Calu3 (cell line): ENCODE measurements at regions of chr17 and their contacts with region 1.

Region 1: GRCh38 chr17:78497115-78497540 is 80.1 kb downstream of the DNAH17 start:
- DNase-seq: peak; percentile 84
- H3K4me3 Mint-ChIP-seq: no peak overlapping the region
- H3K27ac Mint-ChIP-seq: no peak overlapping the region
- H3K4me1 Mint-ChIP-seq: no peaks in the 10 kb centered on the region
- H3K27me3 Mint-ChIP-seq: peaks cover 49% of the 10 kb centered on the region
- CTCF ChIP-seq: peak; percentile 79

Region 2: GRCh38 chr17:78300962-78301822 is 195.9 kb before region 1 on chr17:
- CTCF ChIA-PET with region 1: no interaction called
- intact Hi-C with region 1: no loop called
- DNase-seq: no peak
- H3K4me3 Mint-ChIP-seq: no peak overlapping the region
- H3K27ac Mint-ChIP-seq: no peak overlapping the region
- H3K4me1 Mint-ChIP-seq: no peaks in the 10 kb centered on the region
- H3K27me3 Mint-ChIP-seq: no peaks in the 10 kb centered on the region
- CTCF ChIP-seq: no peak

Region 3: GRCh38 chr17:78559749-78560368 is 62.7 kb after region 1 on chr17:
- CTCF ChIA-PET with region 1: interaction called, 12 read pairs
- intact Hi-C with region 1: no loop called
- DNase-seq: peak; percentile 73
- H3K4me3 Mint-ChIP-seq: no peak overlapping the region
- H3K27ac Mint-ChIP-seq: no peak overlapping the region
- H3K4me1 Mint-ChIP-seq: no peaks in the 10 kb centered on the region
- H3K27me3 Mint-ChIP-seq: peaks cover 18% of the 10 kb centered on the region
- CTCF ChIP-seq: peak; percentile 66

Region 4: DNA sequence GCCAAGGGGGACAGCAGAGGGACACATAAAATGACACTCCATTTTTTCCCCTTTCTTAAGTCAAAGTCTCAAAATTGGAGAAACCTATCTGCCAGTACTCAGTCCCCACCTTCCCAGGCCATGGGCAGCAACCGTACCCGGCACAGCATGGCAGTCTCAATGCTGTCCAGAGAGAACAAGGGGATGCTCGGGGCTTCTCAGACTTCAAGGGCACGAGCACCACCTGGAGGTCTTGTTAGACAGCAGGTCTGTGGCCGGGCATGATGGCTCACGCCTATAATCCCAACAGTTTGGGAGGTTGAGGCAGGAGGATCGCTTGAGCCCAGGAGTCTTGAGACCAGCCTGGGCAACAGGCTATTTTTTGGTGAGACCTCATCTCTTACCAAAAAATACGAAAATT is 76.8 kb after region 1 on chr17:
- CTCF ChIA-PET with region 1: interaction called, 5 read pairs
- intact Hi-C with region 1: loop called (anchors 5 kb)
- DNase-seq: peak; percentile 51
- H3K4me3 Mint-ChIP-seq: no peak overlapping the region
- H3K27ac Mint-ChIP-seq: no peak overlapping the region
- H3K4me1 Mint-ChIP-seq: no peaks in the 10 kb centered on the region
- H3K27me3 Mint-ChIP-seq: peaks cover 34% of the 10 kb centered on the region
- CTCF ChIP-seq: no peak

Region 5: GRCh38 chr17:78708510-78708973 is 211.4 kb after region 1 on chr17:
- CTCF ChIA-PET with region 1: interaction called, 14 read pairs
- intact Hi-C with region 1: loop called (anchors 2 kb)
- DNase-seq: peak; percentile 76
- H3K4me3 Mint-ChIP-seq: no peak overlapping the region
- H3K27ac Mint-ChIP-seq: no peak overlapping the region
- H3K4me1 Mint-ChIP-seq: peaks cover 6% of the 10 kb centered on the region
- H3K27me3 Mint-ChIP-seq: no peaks in the 10 kb centered on the region
- CTCF ChIP-seq: peak; percentile 77